Panc1 (cell line): ENCODE measurements at regions of chr4 and their contacts with region 1.

Region 1: DNA sequence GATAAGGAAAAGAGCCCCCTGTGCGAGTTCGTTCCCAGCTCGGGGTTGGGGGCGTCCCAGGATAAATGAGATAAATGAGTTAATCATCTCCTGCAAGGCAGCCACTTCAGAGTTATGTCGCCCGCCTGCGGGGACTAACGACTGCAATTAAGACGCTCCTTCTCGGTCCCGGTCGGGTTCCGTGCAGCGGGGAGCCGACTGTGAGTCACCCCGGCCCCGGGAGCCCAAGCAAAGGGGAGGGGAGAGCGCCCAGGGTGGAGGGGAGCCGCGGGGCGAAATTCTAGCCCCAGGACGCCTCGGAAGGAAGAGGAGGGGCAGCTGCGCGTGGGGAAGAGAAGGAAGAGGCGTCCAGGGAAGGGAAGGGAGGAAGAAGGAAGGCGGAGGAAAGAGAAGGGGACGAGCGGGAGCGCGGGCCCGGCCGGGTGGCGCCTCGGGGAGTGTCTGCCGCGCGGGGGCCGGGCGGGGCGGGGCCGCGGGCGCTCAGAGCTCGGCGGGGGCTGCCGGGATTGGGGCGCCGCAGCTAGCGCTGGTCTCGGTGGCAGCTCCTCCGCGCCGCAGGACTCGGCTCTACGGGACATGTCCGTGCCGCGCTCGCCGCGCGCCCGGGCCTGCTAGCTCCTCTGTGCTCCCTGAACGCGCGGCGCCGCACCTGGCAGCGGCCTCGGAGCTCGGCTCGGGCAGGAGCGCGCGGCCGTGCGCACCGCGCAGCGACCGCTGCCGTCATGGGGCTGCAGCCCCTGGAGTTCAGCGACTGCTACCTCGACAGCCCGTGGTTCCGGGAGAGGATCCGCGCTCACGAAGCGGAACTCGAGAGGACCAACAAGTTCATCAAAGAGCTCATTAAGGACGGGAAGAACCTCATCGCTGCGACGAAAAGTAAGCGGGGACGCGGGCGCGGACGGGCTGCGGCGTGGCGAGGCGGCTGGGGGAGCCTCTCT is at the start of gene ARHGAP10:
- DNase-seq: no peak
- ATAC-seq: peak; percentile 91
- H3K4me3 ChIP-seq: peak within 1 kb of the TSS; percentile 71 to 88
- H3K27ac ChIP-seq: peak within 1 kb of the TSS; percentile 83
- H3K4me1 ChIP-seq: peaks cover 20% of the 10 kb centered on the region
- H3K27me3 ChIP-seq: no peaks in the 10 kb centered on the region
- CTCF ChIP-seq: no peak
- total RNA-seq, gene ARHGAP10: 11.7 TPM

Region 2: GRCh38 chr4:147707865-147708672 is 23.8 kb before region 1 on chr4:
- CTCF ChIA-PET with region 1: no interaction called
- POLR2A ChIA-PET with region 1: no interaction called
- in situ Hi-C with region 1: no loop called
- intact Hi-C with region 1: loop called (anchors 1 kb)
- DNase-seq: peak; percentile 52
- ATAC-seq: peak; percentile 81
- H3K4me3 ChIP-seq: no peak overlapping the region
- H3K27ac ChIP-seq: no peak overlapping the region
- H3K4me1 ChIP-seq: no peaks in the 10 kb centered on the region
- H3K27me3 ChIP-seq: no peaks in the 10 kb centered on the region
- CTCF ChIP-seq: peak; percentile 78

Region 3: DNA sequence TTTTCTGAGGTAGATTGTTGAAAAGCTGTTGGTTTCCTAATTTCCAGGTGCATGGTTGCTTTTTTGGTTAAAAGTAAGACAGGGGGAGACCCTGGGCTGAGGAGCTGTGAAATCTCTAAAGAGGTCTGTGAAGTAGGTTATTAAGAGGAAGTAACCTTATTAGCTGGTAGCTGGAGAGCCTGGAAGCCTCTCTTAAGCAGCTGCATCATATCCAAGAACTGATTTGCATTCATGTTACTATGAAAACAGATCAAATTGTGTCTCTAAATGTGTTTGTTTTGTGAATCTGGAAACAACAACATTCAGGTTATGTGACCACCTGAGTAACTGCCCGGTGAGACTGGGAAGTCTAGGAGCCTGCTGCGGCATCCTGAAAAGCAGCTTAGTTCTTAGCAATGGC is 54.2 kb after region 1 on chr4:
- CTCF ChIA-PET with region 1: no interaction called
- POLR2A ChIA-PET with region 1: interaction called, 18 read pairs
- in situ Hi-C with region 1: no loop called
- intact Hi-C with region 1: no loop called
- DNase-seq: no peak
- ATAC-seq: no peak
- H3K4me3 ChIP-seq: no peak overlapping the region
- H3K27ac ChIP-seq: no peak overlapping the region
- H3K4me1 ChIP-seq: peaks cover 26% of the 10 kb centered on the region
- H3K27me3 ChIP-seq: no peaks in the 10 kb centered on the region
- CTCF ChIP-seq: no peak